Right ventricle myocardium superior (tissue), 1 donor: ENCODE measurements at regions of chr6 and their contacts with region 1.

Region 1: DNA sequence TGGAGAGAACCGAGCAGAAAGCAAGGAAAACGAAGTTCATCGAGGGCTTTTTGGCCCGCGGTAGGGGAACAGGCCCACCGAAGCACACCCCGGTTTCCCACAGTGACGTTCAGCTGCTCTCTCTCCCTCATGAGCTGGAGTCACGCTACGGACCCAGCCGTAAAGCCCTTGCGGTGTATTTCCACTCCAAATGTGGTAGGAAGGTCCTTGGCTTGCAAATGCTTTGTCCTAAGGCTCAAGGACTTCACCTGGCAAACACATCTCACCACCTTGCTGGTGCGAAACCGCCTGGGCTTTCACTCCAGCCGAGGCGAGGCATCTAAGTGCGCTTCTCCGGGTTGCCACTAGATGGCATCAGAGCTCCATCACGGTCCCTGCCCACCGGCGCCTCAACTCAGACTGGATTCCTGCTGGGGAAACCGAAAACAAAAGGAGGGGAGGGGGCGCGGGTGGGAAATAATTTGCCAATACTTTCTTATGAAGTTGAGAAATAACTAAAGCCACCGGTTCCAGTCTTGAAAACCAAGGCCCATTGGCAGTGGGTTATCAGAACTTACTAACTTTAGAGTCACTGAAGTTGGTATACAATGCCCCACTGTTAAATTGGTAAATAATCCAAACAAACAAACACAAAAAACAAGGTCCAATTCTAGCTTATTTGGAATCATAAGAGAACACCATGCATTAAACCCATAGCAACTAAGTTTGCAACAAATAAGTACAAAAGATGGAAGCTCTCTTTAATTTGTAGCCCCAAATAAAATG is 13.4 kb upstream of the FOXC1 start:
- DNase-seq: no peak
- ATAC-seq: peak; percentile 93

Region 2: DNA sequence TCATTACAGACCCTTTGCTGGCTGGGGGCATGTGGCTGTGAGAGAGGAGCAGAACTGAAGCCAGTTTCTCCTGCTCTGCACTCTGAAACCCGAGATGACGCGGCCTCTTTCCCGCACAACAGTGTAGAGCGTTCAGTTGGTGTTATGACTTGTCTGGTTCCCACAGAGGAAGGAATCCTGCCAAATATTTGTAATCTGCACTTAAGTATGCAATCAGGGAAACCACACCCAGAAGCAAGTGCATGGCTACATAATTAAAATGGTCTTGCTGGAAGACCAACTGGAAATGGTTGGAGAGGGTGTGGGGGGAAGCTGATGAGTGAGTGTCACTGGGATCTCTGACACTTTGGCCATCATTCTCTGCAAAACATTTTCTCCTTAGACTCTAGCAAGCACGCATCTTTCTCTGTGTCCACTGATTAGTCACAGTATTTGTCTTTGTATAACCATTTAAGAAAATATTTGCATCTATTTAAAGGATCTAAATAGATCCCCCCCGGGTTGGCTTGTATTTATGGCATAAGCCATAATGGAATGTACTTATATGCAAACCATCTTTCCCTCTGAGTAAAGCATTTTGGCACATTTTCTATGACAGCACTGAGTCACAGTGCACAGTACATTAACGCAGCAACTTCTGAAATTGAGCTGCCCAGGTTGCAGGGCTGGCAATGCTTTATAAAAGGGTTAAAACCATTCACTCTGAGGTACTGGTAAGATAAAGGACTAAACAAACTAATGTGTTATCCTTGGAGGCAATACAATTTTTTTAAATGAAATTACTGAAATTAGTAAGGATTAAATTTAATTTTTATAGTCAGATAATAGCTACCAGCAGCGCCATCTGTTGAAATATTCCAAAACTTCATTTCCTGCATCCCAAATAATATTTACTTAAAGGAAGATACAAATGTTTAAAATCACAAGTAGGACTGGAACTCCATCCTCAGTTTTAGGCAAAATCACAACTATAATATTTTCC is 90.1 kb after region 1 on chr6:
- intact Hi-C with region 1: no loop called
- DNase-seq: no peak
- ATAC-seq: peak; percentile 57

Region 3: DNA sequence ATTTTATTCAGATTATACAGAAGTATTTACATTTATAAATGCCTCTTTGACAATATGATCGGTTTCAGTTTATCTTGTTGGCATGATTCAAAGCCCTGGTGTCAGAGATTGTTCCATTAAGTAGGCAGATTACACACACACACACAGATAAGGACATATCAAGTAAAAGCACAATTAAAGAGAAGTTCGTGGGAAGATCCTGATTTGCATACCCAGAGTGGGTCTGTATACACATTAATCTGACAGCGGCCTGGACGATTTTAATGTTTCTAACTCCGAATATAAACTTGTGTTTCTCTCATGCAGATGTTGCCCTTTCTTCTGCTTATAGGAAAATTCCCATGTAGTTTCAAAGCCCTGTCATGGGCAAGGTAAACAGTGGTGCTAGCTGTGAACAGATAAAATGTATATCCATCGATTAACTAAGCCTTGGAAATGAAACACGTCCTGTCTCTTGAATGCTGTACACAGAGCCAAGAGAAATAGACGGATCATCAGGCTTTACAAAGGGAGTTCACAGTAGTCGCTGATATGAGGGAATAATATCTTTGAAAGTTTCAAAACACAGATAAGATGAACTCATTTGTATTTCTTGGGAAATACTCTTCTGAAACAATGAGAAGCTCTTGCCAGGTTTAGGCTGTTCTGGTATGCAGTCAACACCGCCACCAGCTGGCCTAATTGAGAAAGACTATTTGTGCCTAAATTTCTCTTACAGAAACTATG is 757.3 kb after region 1 on chr6:
- intact Hi-C with region 1: loop called (anchors 5 kb)
- DNase-seq: no peak
- ATAC-seq: peak; percentile 84

Region 4: DNA sequence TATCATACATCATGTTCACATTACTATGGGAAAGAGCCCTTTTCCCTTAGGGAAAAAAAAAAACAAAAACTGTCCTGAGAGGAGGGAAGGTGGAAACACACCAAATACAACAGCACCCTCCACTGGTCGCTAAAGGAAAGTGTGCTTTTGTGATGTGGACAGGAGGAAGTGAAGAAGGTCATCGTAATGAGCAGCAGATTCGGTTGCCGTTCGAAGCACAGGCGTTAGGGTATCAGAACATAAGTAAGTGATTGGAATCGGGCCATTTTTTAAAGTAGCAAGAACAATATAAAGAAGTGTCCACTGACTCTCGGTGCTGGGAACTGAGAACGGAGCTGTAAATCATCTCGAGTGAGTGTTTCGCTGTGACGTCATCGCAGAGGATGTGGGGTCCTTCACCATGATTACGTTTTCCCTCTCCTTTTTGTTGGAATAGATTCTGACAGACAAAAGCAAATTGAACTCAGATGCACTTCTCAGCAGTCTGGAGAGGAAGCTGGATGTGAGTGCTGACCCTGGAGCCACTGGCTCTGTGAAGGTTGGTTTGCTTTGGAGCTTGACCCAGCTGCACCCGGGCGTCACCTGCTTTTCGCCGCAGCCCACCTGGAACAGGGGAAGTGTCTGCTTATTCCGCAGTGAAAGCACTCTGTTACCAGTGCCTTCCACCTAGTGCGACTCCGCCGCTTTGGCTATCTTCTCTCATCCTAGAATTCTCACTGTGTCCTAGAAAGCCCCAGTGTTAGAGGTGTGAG is 852.7 kb after region 1 on chr6:
- intact Hi-C with region 1: loop called (anchors 10 kb)
- DNase-seq: no peak
- ATAC-seq: peak; percentile 67